Activated CD8-positive, alpha-beta T cell treated with anti-CD3 and anti-CD28 coated beads, Interleukin-2, amount 10 ng/mL, durations not matched to agents 7 days and 5 days (primary cell): ENCODE measurements at regions of chr17 and their contacts with region 1.

Region 1: GRCh38 chr17:75487351-75488070 is 27.8 kb downstream of the CASKIN2 start:
- DNase-seq: peak; percentile 80
- ATAC-seq: peak; percentile 89
- H3K4me3 Mint-ChIP-seq: peak overlapping the region; percentile 67
- H3K27ac Mint-ChIP-seq: peak overlapping the region; percentile 98
- H3K4me1 Mint-ChIP-seq: peaks cover 30% of the 10 kb centered on the region
- H3K27me3 Mint-ChIP-seq: no peaks in the 10 kb centered on the region

Region 2: DNA sequence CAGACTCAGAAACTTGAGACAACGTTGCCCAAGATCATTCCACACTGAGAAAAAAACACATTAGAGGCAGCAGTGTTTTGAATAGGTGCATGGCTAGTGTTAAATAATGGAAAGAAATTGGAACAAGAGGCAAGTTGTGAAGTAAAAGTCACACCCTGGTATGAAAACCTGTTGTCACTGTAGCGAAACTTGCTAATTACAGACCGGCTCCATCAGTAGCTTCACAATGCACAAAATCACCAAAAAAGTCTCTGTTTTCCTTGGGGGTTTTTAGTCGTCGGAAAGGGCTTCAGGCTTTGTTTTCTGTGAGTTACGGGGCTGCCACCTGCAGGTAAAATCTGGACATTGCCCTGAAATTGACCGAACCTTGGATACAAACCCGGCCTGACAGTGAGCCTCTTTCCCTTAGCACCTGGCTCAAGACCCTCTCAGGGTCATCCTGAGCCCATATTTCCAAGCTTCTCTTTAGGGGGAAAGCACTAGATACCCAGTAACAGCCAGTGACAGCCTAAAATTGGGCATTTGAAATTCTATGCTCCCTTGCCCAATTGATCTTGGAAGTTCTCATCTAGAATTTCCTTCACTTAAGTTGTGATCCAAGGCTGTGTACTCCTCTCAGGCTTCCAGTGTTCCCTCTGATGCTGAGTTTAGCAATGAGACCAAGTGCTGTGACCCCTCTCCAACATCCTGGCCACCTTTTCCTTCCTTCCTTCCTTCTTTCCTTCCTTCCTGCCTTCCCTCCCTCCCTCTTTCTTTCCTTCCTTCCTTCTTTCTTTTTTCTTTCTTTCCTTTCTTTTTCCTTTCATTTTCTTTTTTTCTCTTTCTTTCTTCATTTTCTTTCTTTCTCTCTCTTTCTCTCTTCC is 74.8 kb before region 1 on chr17:
- CTCF ChIA-PET with region 1: no interaction called
- POLR2A ChIA-PET with region 1: no interaction called
- DNase-seq: peak; percentile 84
- ATAC-seq: peak; percentile 83
- H3K4me3 Mint-ChIP-seq: peak overlapping the region; percentile 55
- H3K27ac Mint-ChIP-seq: peak overlapping the region; percentile 72
- H3K4me1 Mint-ChIP-seq: peaks cover 39% of the 10 kb centered on the region
- H3K27me3 Mint-ChIP-seq: peaks cover 2% of the 10 kb centered on the region

Region 3: GRCh38 chr17:75456417-75457046 is 31.0 kb before region 1 on chr17 and contains the start of gene TMEM94:
- CTCF ChIA-PET with region 1: interaction called, 3 read pairs
- POLR2A ChIA-PET with region 1: interaction called, 13 read pairs
- DNase-seq: peak; percentile 96
- ATAC-seq: peak; percentile 98
- H3K4me3 Mint-ChIP-seq: peak within 1 kb of the TSS; percentile 87
- H3K27ac Mint-ChIP-seq: peak within 1 kb of the TSS; percentile 93
- H3K4me1 Mint-ChIP-seq: peaks cover 43% of the 10 kb centered on the region
- H3K27me3 Mint-ChIP-seq: no peaks in the 10 kb centered on the region
- total RNA-seq, gene TMEM94: 81.9 to 84.8 TPM

Region 4: GRCh38 chr17:75468291-75468754 is 19.2 kb before region 1 on chr17:
- CTCF ChIA-PET with region 1: no interaction called
- POLR2A ChIA-PET with region 1: no interaction called
- DNase-seq: no peak
- ATAC-seq: no peak
- H3K4me3 Mint-ChIP-seq: no peak overlapping the region
- H3K27ac Mint-ChIP-seq: no peak overlapping the region
- H3K4me1 Mint-ChIP-seq: peaks cover 3% of the 10 kb centered on the region
- H3K27me3 Mint-ChIP-seq: no peaks in the 10 kb centered on the region

Region 5: DNA sequence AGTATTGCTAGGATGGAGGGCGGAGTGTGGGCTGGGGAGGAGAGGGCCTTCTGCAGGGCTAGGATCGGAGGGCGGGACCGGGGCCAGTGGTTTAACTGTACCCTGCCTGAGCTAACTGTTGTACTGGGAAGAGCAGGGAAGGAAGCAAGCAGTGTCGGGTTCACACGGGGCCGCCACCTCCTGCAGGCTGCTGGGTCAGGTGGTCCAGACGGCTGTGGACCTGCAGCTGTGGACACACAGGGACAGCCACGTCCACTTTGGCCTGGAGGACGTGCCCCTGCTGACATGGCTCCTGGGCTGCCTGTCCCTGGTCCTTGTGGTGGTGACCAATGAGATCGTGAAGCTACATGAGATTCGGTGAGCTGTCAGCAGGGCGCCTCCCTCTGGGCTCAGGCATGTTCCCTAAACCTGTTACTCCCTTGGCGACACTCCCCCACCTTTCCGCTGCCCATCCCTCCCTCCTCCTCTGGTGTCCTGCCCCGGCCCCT is 11.3 kb after region 1 on chr17:
- CTCF ChIA-PET with region 1: interaction called, 4 read pairs
- POLR2A ChIA-PET with region 1: interaction called, 10 read pairs
- DNase-seq: no peak
- ATAC-seq: no peak
- H3K4me3 Mint-ChIP-seq: no peak overlapping the region
- H3K27ac Mint-ChIP-seq: no peak overlapping the region
- H3K4me1 Mint-ChIP-seq: peaks cover 7% of the 10 kb centered on the region
- H3K27me3 Mint-ChIP-seq: no peaks in the 10 kb centered on the region

Region 6: GRCh38 chr17:75549221-75550138 is 62.0 kb after region 1 on chr17:
- CTCF ChIA-PET with region 1: no interaction called
- POLR2A ChIA-PET with region 1: no interaction called
- DNase-seq: no peak
- ATAC-seq: no peak
- H3K4me3 Mint-ChIP-seq: no peak overlapping the region
- H3K27ac Mint-ChIP-seq: no peak overlapping the region
- H3K4me1 Mint-ChIP-seq: no peaks in the 10 kb centered on the region
- H3K27me3 Mint-ChIP-seq: no peaks in the 10 kb centered on the region